AG04450 (cell line): ENCODE measurements at regions of chr11 and their contacts with region 1.

Region 1: DNA sequence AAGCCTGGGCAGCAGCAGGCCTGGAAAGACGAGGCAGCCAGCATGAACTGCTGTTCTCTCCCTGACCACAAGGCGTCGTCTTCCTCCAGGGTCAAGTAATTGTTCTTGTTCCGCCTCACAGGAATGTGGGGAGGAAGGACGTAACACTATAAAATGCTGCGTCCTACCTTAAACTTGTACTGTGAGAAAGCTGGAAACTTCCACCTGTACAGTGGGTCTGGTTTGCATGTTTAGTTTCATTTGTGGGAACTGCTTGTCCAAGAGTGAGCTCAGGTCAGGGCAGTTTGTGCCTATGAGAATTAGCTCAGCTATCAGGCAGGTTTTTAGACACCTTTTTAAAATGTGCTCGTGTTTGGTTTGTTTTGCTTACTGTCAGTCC is 55.2 kb downstream of the PANX1 start:
- DNase-seq: no peak
- H3K4me3 ChIP-seq: no peak overlapping the region
- H3K27ac ChIP-seq: no peak overlapping the region
- H3K27me3 ChIP-seq: no peaks in the 10 kb centered on the region
- CTCF ChIP-seq: peak; percentile 76

Region 2: GRCh38 chr11:94201004-94201465 is 17.2 kb after region 1 on chr11:
- CTCF ChIA-PET with region 1: interaction called, 18 read pairs
- POLR2A ChIA-PET with region 1: interaction called, 30 read pairs
- DNase-seq: peak; percentile 76
- H3K4me3 ChIP-seq: no peak overlapping the region
- H3K27ac ChIP-seq: peak overlapping the region; percentile 82
- H3K27me3 ChIP-seq: no peaks in the 10 kb centered on the region
- CTCF ChIP-seq: no peak

Region 3: DNA sequence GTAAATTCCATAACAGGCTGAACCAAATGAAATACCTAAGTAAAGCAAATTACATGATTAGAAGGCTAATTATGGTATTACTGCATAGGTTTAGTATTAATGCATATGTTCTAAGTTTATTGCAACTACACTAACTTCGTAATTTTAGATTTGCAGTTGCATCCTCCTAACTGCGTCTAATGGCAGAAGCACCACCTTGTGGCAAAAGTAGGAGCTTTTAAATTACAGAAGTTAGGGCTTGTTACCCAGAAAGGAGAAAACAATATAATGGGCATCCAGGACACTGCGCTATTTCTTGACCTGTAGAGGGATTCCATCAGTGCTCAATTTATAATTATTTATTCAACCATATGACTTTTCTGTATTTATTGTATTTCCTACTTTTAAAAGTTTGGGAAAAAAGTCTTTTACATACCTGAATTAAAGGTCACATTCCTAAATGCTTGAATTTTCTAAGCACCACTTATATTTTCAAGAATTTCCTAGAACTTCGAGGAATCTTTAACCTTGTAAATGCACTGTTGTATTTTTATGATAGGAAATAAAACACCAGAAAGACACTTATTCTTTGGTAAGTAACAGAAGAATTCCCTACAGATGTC is 233.6 kb after region 1 on chr11:
- CTCF ChIA-PET with region 1: interaction called, 68 read pairs
- POLR2A ChIA-PET with region 1: no interaction called
- DNase-seq: peak; percentile 38
- H3K4me3 ChIP-seq: no peak overlapping the region
- H3K27ac ChIP-seq: no peak overlapping the region
- H3K27me3 ChIP-seq: no peaks in the 10 kb centered on the region
- CTCF ChIP-seq: peak; percentile 77

Region 4: GRCh38 chr11:94504689-94505293 is 320.9 kb after region 1 on chr11:
- CTCF ChIA-PET with region 1: interaction called, 26 read pairs
- POLR2A ChIA-PET with region 1: no interaction called
- DNase-seq: peak; percentile 34
- H3K4me3 ChIP-seq: no peak overlapping the region
- H3K27ac ChIP-seq: no peak overlapping the region
- H3K27me3 ChIP-seq: no peaks in the 10 kb centered on the region
- CTCF ChIP-seq: peak; percentile 71